Cardiac septum (tissue), 1 donor: ENCODE measurements at regions of chr1 and their contacts with region 1.

Region 1: GRCh38 chr1:171141688-171142415 is 43.2 kb upstream of the FMO2 start:
- DNase-seq: no peak

Region 2: DNA sequence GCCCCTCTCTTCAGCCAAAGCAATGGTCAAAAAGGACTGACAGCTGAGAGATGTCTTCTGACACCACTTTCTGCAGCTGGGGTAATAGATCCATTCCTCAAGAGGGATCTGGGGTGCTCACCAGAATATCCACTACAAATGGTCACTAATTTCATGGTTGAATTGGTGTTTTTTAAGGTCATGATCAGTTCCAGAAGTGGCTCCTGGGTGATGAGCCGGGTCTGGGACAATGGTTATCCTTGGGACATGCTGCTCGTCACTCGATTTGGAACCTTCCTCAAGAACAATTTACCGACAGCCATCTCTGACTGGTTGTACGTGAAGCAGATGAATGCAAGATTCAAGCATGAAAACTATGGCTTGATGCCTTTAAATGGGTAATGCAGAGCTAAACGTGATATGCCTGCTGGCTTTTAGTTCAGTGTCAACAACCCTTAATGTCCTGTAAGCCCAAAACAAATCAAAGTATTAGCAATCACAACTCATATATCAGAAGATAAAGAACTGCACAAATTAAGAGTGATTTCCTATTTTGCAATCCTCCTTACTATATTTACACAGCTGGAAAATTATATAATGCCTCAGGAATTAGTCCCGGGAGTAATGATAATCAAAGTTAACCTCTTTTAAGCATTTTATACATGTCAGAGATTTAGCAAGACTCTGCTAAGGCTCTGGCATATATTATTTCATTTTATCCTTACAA is 31.1 kb before region 1 on chr1:
- intact Hi-C with region 1: loop called (anchors 2 kb)
- DNase-seq: no peak